Esophagus squamous epithelium (tissue), 5 donors: ENCODE measurements at regions of chr2 and their contacts with region 1.

Region 1: DNA sequence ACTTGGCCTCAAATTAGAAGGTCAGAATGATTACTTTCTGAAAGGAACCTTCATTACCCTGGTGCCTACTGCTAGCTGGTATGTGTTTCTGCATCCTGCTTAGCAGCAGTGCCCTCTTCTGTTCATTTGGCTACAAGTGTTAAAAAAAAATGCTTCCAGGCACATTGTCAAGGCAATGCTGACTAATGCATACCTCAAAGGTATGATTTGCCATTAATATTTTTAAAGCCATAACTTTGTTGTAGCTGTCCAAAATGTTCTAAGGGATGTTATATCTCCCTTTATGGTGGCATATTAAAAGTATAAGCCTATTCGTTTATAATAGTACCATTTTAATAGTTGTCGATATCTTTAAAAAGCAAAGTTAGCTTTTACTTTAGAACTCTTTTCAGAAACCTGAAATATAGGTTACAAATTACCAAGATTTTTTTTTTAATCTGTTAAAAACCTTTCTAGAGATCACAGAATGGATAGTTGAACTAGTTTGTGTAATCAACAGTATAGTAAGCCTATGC is 52.0 kb upstream of the FAM171B start:
- DNase-seq: no peak
- H3K4me3 ChIP-seq: no peak overlapping the region
- H3K27ac ChIP-seq: no peak overlapping the region
- H3K4me1 ChIP-seq: peaks cover 0 to 5% (median 0%) of the 10 kb centered on the region in 3 donors
- H3K27me3 ChIP-seq: no peaks in the 10 kb centered on the region
- CTCF ChIP-seq: peak; percentile 13 to 79 (median 62)
- POLR2A ChIP-seq: no peak

Region 2: DNA sequence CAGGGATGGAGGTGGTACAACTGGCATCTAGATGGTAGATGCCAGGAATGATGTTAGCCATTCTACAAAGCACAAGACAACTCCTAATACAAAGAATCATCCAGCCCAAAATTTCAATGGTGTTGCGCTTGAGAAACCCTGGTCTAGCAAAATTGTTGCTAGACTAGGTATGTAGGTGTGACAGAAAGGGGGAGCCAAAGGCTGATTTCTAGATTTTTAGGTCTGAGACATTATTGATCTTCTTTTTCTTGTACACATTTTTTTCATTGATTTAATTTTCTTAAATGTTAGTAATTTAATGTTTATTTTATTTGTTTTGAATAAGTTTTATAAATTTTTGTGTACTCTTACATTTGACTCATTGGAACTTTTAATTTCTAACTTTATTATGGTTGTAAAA is 686.8 kb before region 1 on chr2:
- intact Hi-C with region 1: no loop called
- DNase-seq: no peak
- H3K4me3 ChIP-seq: no peak overlapping the region
- H3K27ac ChIP-seq: no peak overlapping the region
- H3K4me1 ChIP-seq: no peaks in the 10 kb centered on the region
- H3K27me3 ChIP-seq: no peaks in the 10 kb centered on the region
- CTCF ChIP-seq: no peak
- POLR2A ChIP-seq: no peak

Region 3: DNA sequence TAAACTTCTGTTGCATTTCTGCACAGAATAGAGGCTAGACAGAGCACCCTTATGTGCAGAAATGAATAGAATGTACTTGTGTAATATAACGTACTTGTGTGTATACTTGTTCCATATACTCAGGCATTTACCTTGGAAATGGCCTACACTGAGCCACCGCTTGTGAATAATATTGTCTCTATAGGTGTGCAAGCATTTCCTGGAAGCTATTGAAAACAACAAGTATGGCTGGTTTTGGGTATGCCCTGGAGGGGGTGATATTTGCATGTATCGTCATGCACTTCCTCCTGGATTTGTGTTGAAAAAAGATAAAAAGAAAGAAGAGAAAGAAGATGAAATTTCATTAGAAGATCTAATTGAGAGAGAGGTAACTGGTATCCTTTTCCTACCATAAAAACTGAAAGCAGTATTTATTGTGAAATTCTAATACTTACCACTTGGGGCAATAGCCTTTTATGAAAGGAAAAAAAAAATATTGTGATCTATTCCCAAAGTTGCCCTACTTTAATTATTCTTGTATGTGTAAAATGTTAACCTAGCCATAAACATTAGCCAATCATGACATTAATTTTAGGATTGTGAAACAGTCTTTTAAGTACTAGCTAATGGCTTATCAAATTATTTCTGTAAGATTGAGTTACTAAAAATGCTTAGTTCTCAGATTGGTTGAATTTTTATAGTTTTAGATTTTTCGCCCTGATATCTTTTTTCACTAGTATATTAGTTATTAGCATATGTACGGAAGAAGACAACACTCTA is 137.8 kb before region 1 on chr2:
- intact Hi-C with region 1: loop called (anchors 5 kb)
- DNase-seq: no peak
- H3K4me3 ChIP-seq: no peak overlapping the region
- H3K27ac ChIP-seq: peak overlapping the region in 1 of 4 donors; percentile 22
- H3K4me1 ChIP-seq: peaks cover 0 to 18% (median 0%) of the 10 kb centered on the region in 3 donors
- H3K27me3 ChIP-seq: no peaks in the 10 kb centered on the region
- CTCF ChIP-seq: peak in 5 of 6 experiments; percentile 42 to 74 (median 60)
- POLR2A ChIP-seq: no peak